A549 (cell line): ENCODE measurements at regions of chr7 and their contacts with region 1.

Region 1: GRCh38 chr7:67377939-67378862 is 381.6 kb downstream of the TYW1 start:
- DNase-seq: peak; percentile 57 to 78
- ATAC-seq: peak; percentile 92 to 99
- H3K4me3 ChIP-seq: no peak overlapping the region
- H3K27ac ChIP-seq: no peak overlapping the region
- H3K4me1 ChIP-seq: no peaks in the 10 kb centered on the region
- CTCF ChIP-seq: peak; percentile 67
- EP300 ChIP-seq: no peak
- POLR2A ChIP-seq: no peak
- RAD21 ChIP-seq: peak; percentile 84 to 88

Region 2: DNA sequence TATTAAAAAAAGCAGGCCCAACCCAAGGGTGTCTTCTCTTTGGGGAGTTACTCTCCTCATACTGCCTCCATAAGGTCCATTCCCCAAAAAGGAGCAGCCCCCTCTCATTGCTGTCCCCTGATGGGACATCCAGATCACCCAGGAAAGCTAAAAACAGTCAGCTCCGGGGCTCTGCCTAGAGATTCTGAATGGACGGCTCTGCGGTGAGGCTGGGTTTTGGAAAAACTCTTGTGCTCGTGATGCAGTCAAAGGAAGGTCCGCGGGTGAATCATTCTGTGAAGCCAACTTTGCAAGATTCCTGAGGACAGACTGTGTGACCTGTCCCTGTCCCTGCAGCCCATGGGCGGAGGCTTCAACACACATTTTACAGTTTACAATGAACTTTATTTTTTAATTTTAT is 30.0 kb before region 1 on chr7:
- CTCF ChIA-PET with region 1: no interaction called
- POLR2A ChIA-PET with region 1: no interaction called
- DNase-seq: no peak
- ATAC-seq: no peak
- H3K4me3 ChIP-seq: no peak overlapping the region
- H3K27ac ChIP-seq: no peak overlapping the region
- H3K4me1 ChIP-seq: no peaks in the 10 kb centered on the region
- CTCF ChIP-seq: no peak
- EP300 ChIP-seq: no peak
- POLR2A ChIP-seq: no peak
- RAD21 ChIP-seq: no peak

Region 3: GRCh38 chr7:67364431-67365017 is 13.7 kb before region 1 on chr7:
- CTCF ChIA-PET with region 1: interaction called, 12 read pairs
- POLR2A ChIA-PET with region 1: no interaction called
- DNase-seq: no peak
- ATAC-seq: 0 out of 6 replicates have a peak, but pooled peaks of 1 of the 2 experiments have one; percentile 42
- H3K4me3 ChIP-seq: no peak overlapping the region
- H3K27ac ChIP-seq: no peak overlapping the region
- H3K4me1 ChIP-seq: no peaks in the 10 kb centered on the region
- CTCF ChIP-seq: no peak
- EP300 ChIP-seq: no peak
- POLR2A ChIP-seq: no peak
- RAD21 ChIP-seq: no peak